Activated CD4-positive, alpha-beta memory T cell treated with anti-CD3 and anti-CD28 coated beads for 36 hours (primary cell): ENCODE measurements at regions of chr7 and their contacts with region 1.

Region 1: GRCh38 chr7:100586266-100587025 is at the start of gene FBXO24:
- DNase-seq: peak; percentile 100
- H3K4me3 Mint-ChIP-seq: peak within 1 kb of the TSS; percentile 85
- H3K27ac Mint-ChIP-seq: peak within 1 kb of the TSS; percentile 98
- H3K4me1 Mint-ChIP-seq: peaks cover 20% of the 10 kb centered on the region
- H3K27me3 Mint-ChIP-seq: peaks cover 2% of the 10 kb centered on the region
- total RNA-seq, gene FBXO24: 2.2 to 2.6 TPM

Region 2: DNA sequence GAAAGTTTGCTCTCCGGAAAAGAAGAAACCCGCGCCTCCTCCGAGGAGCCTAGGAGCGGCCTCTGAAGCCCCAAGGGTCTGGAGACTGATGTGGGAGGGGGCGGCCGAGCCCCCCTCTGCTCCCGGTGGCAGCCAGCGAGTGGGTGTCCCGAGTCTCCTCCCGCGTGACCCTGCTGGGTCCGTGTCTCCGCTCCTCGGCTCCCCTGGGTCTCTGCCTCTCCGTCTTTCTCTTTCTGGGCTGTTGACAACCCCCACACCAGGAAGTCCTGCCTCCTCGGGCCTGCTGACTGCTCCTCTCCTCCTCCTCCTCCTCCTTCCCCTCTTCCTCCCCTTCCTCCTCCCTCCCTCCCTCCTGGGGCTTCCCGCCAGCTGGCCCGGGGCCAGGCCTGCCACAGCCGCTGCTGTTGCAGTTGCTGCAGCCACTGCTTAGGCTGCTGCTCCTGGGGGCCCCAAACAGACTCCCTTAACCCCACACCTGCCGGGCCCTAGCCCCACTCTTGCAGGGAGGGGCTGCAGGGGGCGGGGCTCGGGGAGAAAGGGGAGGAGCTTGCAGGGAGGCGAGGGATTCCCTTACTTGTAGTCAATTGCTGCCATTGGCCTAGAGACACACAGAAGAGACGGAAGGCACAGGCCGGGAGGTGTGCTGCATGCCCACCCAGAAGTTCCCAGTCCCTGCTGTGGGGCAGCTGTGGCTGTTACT is 107.3 kb before region 1 on chr7 and contains the start of gene TSC22D4:
- CTCF ChIA-PET with region 1: interaction called, 5 read pairs
- POLR2A ChIA-PET with region 1: interaction called, 9 read pairs
- intact Hi-C with region 1: loop called (anchors 1 kb)
- DNase-seq: peak; percentile 95
- H3K4me3 Mint-ChIP-seq: peak within 1 kb of the TSS; percentile 95
- H3K27ac Mint-ChIP-seq: peak within 1 kb of the TSS; percentile 95
- H3K4me1 Mint-ChIP-seq: peaks cover 40% of the 10 kb centered on the region
- H3K27me3 Mint-ChIP-seq: no peaks in the 10 kb centered on the region
- total RNA-seq, gene TSC22D4: 87.8 to 89.5 TPM

Region 3: DNA sequence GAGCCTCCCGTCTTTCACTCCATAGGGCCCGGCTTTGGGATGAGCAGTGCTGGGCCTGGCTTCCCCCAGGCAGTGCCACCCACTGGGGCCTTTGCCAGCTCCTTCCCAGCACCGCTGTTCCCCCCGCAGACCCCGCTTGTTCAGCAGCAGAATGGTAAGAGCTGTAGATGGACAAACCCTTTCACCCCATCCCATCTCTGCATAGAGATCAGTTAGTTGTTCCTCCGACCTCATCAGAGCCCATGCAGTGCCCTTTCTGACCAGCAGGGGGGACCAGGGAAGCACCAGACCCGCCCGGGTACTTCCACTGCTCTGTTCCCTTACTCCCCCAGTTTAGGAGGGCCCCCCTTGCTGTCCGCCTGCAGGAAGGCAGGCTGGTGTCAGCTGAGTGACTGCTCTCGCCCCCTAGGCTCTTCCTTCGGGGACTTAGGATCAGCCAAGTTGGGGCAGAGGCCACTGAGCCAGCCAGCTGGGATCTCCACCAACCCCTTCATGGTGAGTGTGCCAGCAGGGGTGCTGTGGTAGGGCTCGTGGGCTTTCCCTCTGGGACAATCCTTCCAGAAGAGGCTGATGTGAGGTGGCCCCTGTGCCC is 22.5 kb before region 1 on chr7:
- CTCF ChIA-PET with region 1: interaction called, 30 read pairs
- POLR2A ChIA-PET with region 1: interaction called, 28 read pairs
- intact Hi-C with region 1: loop called (anchors 2 kb)
- DNase-seq: peak; percentile 86
- H3K4me3 Mint-ChIP-seq: no peak overlapping the region
- H3K27ac Mint-ChIP-seq: no peak overlapping the region
- H3K4me1 Mint-ChIP-seq: peaks cover 18% of the 10 kb centered on the region
- H3K27me3 Mint-ChIP-seq: no peaks in the 10 kb centered on the region

Region 4: DNA sequence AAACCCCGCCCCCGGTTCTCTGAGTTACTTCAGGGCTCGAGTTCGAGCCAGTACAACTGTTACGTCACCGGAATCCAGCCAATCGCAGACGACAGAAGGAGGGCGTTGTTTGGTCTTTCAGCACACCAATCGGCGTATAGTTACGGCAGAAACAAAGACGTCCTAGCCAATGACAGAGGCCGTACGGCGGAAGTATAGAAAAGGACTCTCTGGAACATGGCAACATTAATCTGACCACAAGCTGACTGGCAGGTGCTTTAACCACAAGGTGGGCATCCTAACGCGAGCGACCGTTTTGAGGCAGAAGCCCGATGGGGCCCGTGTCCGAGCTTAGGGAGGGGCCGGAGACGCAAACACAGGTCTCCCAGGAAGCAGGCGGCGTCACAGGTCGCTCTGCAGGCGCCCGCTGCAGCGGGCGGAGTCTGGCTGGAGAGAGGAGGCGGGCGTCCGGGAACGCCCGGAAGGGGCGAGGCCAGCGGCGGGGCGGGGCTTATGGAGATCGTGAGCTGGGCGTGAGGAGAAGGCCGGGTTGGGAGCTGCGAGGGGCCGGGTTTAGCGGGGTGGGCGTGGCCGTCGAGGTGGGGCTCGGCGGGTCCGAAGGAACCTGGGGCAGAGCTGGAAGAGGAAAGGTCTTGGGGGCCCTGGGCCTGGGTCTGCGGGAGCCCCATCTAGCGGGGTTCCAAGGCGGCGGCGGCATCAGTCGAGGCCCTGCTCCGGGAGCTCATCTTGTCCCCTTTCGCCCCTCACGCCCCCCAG is 25.7 kb after region 1 on chr7 and contains the start of gene MOSPD3:
- CTCF ChIA-PET with region 1: interaction called, 11 read pairs
- POLR2A ChIA-PET with region 1: interaction called, 31 read pairs
- intact Hi-C with region 1: loop called (anchors 1 kb)
- DNase-seq: peak; percentile 98
- H3K4me3 Mint-ChIP-seq: peak within 1 kb of the TSS; percentile 90
- H3K27ac Mint-ChIP-seq: peak within 1 kb of the TSS; percentile 98
- H3K4me1 Mint-ChIP-seq: peaks cover 14% of the 10 kb centered on the region
- H3K27me3 Mint-ChIP-seq: no peaks in the 10 kb centered on the region
- total RNA-seq, gene MOSPD3: 14.0 to 14.4 TPM

Region 5: GRCh38 chr7:100673300-100673941 is 87.0 kb after region 1 on chr7 and contains the start of gene GNB2:
- CTCF ChIA-PET with region 1: no interaction called
- POLR2A ChIA-PET with region 1: interaction called, 4 read pairs
- intact Hi-C with region 1: loop called (anchors 1 kb)
- DNase-seq: peak; percentile 100
- H3K4me3 Mint-ChIP-seq: peak within 1 kb of the TSS; percentile 95
- H3K27ac Mint-ChIP-seq: peak within 1 kb of the TSS; percentile 97
- H3K4me1 Mint-ChIP-seq: peaks cover 8% of the 10 kb centered on the region
- H3K27me3 Mint-ChIP-seq: no peaks in the 10 kb centered on the region
- total RNA-seq, gene GNB2: 228 to 231 TPM